Heart right ventricle (tissue), 16 donors: ENCODE measurements at regions of chr13 and their contacts with region 1.

Region 1: DNA sequence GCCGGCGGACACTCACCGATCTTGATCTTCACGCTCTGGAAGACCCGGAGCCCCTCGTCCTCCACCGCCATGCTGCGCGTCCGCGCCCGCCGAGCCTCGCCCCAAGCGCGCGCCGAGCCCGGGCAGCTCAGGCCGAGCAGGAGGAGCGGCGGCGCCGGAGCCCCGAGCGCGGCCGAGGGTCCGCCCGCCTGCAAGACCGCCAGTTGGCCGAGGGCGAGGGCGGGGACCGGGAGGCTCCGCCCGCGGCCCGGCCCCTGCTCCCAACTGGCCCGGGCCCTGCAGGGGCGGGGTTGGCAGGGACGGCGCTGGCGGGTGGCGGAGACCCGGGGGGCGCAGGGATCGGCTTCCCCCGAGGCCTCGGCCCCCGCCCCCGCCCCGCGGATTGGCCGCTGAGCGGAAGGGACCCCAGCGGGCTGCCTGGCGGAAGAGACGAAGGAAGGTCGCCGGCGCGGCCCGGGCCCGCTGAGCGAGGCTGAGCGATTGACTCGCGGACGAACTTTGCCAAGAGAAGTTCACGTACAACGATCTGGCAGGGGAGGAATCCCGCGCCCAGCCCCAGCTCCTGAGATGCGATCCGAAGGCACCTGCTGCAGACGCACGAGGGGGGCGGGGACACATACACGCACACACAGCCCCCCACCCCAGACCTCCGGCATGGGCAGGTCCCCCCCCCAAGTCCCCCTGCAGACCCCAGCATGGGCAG is at the start of gene RASA3:
- DNase-seq: peak; percentile 72 to 85
- ATAC-seq: peak; percentile 77 to 94 (median 84)
- H3K4me3 ChIP-seq: peak within 1 kb of the TSS; percentile 64 to 98 (median 84)
- H3K27ac ChIP-seq: peak within 1 kb of the TSS; percentile 2 to 92 (median 78)
- H3K4me1 ChIP-seq: peaks cover 25 to 48% (median 42%) of the 10 kb centered on the region in 9 donors
- H3K27me3 ChIP-seq: no peaks in the 10 kb centered on the region
- CTCF ChIP-seq: no peak
- total RNA-seq, gene RASA3: 7.3 to 16.9 (median 10.6) TPM

Region 2: GRCh38 chr13:113997845-113998668 is 134.5 kb before region 1 on chr13:
- intact Hi-C with region 1: loop called in 1 of 10 experiments (anchors 10 kb)
- DNase-seq: peak; percentile 48 to 59
- ATAC-seq: peak; percentile 18 to 68 (median 50)
- H3K4me3 ChIP-seq: no peak overlapping the region
- H3K27ac ChIP-seq: peak overlapping the region in 6 of 10 donors; percentile 23 to 65 (median 34)
- H3K4me1 ChIP-seq: peaks cover 0 to 15% (median 5%) of the 10 kb centered on the region in 9 donors
- H3K27me3 ChIP-seq: no peaks in the 10 kb centered on the region
- CTCF ChIP-seq: no peak

Region 3: GRCh38 chr13:114025714-114026431 is 106.7 kb before region 1 on chr13:
- intact Hi-C with region 1: loop called in 1 of 10 experiments (anchors 5 kb)
- DNase-seq: peak in 1 of 2 donors; percentile 26
- ATAC-seq: peak; percentile 27 to 59 (median 48)
- H3K4me3 ChIP-seq: no peak overlapping the region
- H3K27ac ChIP-seq: peak overlapping the region in 4 of 10 donors; percentile 2 to 75 (median 43)
- H3K4me1 ChIP-seq: peaks cover 8 to 30% (median 27%) of the 10 kb centered on the region in 9 donors
- H3K27me3 ChIP-seq: no peaks in the 10 kb centered on the region
- CTCF ChIP-seq: no peak

Region 4: GRCh38 chr13:114065141-114065925 is 67.2 kb before region 1 on chr13:
- intact Hi-C with region 1: loop called in 7 of 10 experiments (anchors 5 to 10 kb)
- DNase-seq: peak; percentile 82 to 84
- ATAC-seq: peak; percentile 88 to 94 (median 90)
- H3K4me3 ChIP-seq: peak overlapping the region in 8 of 10 donors; percentile 16 to 49 (median 40)
- H3K27ac ChIP-seq: peak overlapping the region; percentile 74 to 98 (median 90)
- H3K4me1 ChIP-seq: peaks cover 12 to 77% (median 54%) of the 10 kb centered on the region in 9 donors
- H3K27me3 ChIP-seq: no peaks in the 10 kb centered on the region
- CTCF ChIP-seq: no peak